Activated CD4-positive, alpha-beta T cell treated with anti-CD3 and anti-CD28 coated beads, Interleukin-2, amount 10 ng/mL, durations not matched to agents 24 days and 14 days (primary cell): ENCODE measurements at regions of chr9 and their contacts with region 1.

Region 1: GRCh38 chr9:77779010-77779409 is 130.9 kb upstream of the GNA14 start:
- DNase-seq: no peak
- H3K4me3 Mint-ChIP-seq: peak overlapping the region; percentile 66
- H3K27ac Mint-ChIP-seq: peak overlapping the region; percentile 75
- H3K4me1 Mint-ChIP-seq: peaks cover 34% of the 10 kb centered on the region
- H3K27me3 Mint-ChIP-seq: no peaks in the 10 kb centered on the region

Region 2: DNA sequence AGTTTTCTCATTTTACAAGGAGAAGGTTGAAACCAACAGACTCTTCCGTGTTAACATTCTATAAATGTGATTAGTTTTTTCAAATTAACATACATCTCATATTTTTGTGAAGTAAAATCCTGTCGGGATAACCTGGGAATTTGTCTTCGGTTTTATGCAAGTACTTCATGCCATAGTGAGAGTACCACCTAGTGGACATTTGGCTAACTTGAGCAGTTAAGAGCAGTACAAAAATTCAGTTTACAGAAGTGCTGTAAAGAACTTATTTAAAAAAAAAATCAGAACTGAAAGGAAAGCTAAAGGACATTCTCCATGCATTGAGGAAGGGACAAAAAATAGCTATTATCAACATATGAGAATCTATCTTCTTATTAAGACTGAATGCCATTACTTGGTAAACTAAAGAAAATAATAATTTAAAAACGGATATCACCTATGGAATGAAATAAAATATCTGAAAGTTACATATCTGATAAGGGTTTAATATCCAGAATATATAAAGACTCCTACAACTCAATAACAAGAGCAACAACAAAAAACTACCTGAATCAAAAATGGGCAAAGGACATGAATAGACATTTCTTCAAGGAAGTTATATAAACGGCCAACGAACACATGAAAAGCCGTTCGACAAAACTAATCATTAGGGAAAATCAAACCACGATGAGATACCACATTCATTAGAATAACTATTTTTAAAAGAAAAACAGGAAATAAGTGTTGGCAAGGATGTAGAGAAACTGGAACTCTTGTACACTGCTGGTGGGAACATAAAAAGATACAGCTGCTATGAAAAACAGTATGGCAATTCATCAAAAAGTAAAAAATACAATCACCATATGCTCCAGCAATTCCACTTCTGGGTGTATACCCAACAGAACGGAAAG is 13.9 kb before region 1 on chr9:
- intact Hi-C with region 1: loop called (anchors 2 kb)
- DNase-seq: no peak
- H3K4me3 Mint-ChIP-seq: no peak overlapping the region
- H3K27ac Mint-ChIP-seq: no peak overlapping the region
- H3K4me1 Mint-ChIP-seq: no peaks in the 10 kb centered on the region
- H3K27me3 Mint-ChIP-seq: no peaks in the 10 kb centered on the region

Region 3: GRCh38 chr9:77793904-77794303 is 14.9 kb after region 1 on chr9:
- intact Hi-C with region 1: loop called (anchors 2 kb)
- DNase-seq: no peak
- H3K4me3 Mint-ChIP-seq: no peak overlapping the region
- H3K27ac Mint-ChIP-seq: no peak overlapping the region
- H3K4me1 Mint-ChIP-seq: peaks cover 6% of the 10 kb centered on the region
- H3K27me3 Mint-ChIP-seq: no peaks in the 10 kb centered on the region

Region 4: DNA sequence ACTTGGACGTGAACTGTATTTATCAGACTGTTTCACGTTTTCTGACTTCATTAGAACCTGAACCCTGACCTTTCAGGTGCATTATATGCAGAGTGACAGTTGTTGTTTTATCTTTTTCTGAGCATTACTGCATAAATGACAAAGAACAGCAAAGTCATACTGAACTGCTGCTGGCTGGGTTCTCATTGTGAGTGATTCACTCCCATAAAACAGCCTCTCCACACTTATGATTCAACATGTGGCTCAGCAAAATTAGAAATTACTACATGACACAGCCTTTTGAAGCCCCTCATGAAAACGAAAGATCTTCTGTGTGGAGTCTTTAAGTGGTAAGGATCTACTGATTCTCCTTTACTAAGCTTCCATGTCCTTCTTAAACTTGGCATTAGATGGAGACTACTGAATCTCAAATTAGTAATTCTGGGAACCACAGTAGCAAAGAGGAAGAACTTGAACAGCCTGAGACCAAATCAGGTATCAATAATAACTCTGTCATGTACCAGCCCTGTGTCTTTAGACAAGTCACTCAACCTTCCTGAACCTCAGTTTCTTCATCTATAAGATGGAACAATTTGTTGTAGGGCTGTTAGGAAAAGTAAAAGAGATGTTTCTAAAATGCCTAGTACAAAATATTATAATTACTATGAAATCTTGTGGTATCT is 41.4 kb after region 1 on chr9:
- intact Hi-C with region 1: loop called (anchors 5 kb)
- DNase-seq: no peak
- H3K4me3 Mint-ChIP-seq: no peak overlapping the region
- H3K27ac Mint-ChIP-seq: peak overlapping the region; percentile 64
- H3K4me1 Mint-ChIP-seq: peaks cover 19% of the 10 kb centered on the region
- H3K27me3 Mint-ChIP-seq: no peaks in the 10 kb centered on the region

Region 5: DNA sequence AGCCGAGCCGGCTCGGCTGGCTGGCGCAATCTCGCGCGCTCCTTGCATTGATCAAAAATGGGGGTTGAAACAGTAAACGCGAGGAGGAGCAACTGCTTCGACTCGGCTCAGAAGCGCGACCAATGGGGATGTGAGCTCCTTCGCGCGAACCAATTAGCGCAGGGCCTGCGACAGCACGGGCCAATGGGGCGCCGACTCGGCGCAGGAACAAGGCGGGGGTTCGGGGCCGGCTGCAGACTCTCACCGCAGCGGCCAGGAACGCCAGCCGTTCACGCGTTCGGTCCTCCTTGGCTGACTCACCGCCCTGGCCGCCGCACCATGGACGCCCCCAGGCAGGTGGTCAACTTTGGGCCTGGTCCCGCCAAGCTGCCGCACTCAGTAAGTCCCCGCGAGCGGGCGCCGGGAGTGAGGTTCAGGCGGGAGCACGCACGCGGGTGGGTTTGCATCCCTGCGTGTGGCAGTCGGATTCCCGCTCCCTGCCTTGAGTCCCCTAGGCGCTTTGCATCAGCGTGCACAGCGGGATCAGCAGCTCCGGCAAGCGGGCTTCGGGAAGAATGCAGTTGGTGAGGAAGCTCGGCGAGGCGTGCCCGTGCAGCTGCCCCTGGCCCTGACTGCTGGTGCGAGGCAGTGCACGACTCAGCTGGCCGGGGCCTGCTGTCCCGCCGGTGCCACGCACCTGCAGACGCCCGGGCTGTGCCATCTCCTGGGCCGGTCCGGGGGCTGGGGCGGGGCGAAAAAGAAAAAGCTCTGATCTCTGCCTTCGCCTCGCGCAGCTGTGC is 518.1 kb after region 1 on chr9 and contains the start of gene PSAT1:
- intact Hi-C with region 1: no loop called
- DNase-seq: peak; percentile 98
- H3K4me3 Mint-ChIP-seq: peak within 1 kb of the TSS; percentile 96
- H3K27ac Mint-ChIP-seq: peak within 1 kb of the TSS; percentile 97
- H3K4me1 Mint-ChIP-seq: peaks cover 36% of the 10 kb centered on the region
- H3K27me3 Mint-ChIP-seq: no peaks in the 10 kb centered on the region
- total RNA-seq, gene PSAT1: 88.5 and 91.3 TPM in 2 replicates